WTC11 (cell line): ENCODE measurements at regions of chr1 and their contacts with region 1.

Region 1: DNA sequence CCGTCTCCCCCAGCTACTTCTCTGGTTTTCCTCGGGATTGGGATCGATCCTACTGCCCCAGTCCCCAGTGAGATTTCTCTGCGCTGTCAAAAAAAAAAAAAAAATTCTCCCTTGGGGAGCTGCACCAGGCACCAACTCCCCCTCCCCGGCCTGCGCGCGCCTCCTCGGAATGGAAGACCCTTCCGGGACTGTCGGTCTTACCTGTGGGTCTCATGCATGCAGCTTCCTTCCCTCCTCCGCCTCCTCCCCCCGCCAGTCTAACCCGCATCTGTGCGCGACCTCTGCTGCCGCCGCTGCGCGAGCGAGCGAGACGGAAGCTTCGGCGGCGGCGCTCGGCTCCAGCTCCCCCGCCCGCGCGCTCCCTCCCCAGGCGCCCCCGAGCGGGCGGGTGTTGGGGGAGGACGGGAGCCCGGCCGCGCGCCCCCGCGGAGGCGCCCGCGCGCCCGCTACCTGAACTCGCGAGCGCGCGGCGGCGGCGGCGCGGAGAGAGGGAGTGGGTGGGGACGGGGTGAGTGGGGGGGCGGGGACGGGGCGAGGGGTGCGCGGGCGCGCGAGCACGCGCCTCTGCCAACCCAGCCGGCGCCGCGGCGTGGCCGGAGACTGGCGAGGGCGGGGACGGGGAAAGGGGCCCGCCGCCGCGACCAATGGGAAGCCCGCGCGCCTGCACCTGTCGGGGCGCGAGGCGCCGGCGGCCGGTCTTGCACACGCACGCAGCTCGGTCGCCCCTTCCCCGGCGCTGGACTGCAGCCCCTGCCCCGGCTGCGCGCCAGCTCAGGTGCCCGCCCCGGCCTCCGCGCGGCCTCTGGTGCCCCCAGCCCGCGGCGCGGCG is at the start of gene SUSD4:
- DNase-seq: peak; percentile 79
- ATAC-seq: peak; percentile 68
- H3K4me3 Mint-ChIP-seq: peak within 1 kb of the TSS; percentile 88
- H3K27ac Mint-ChIP-seq: no peak within 1 kb of the TSS
- H3K4me1 Mint-ChIP-seq: peaks cover 17% of the 10 kb centered on the region
- H3K27me3 Mint-ChIP-seq: peaks cover 78% of the 10 kb centered on the region
- CTCF ChIP-seq: no peak
- total RNA-seq, gene SUSD4: 1.8 to 2.6 TPM (median 2.6 TPM) in 3 replicates

Region 2: GRCh38 chr1:223374064-223374610 is 10.1 kb after region 1 on chr1:
- CTCF ChIA-PET with region 1: interaction called, 23 read pairs
- POLR2A ChIA-PET with region 1: interaction called, 3 read pairs
- DNase-seq: no peak
- ATAC-seq: peak; percentile 88
- H3K4me3 Mint-ChIP-seq: no peak overlapping the region
- H3K27ac Mint-ChIP-seq: no peak overlapping the region
- H3K4me1 Mint-ChIP-seq: no peaks in the 10 kb centered on the region
- H3K27me3 Mint-ChIP-seq: peaks cover 37% of the 10 kb centered on the region
- CTCF ChIP-seq: no peak